ENCODE measurements at regions of chr3 and their contacts with region 1.

Region 1: GRCh38 chr3:62188681-62189383 is 184.5 kb downstream of the FEZF2 start:
- DNase-seq: peak; percentile 76 to 92
- H3K4me3 ChIP-seq: no peak overlapping the region
- H3K27ac ChIP-seq: no peak overlapping the region
- H3K4me1 ChIP-seq: peaks cover 0 to 20% (median 3%) of the 10 kb centered on the region in 4 donors
- H3K27me3 ChIP-seq: no peaks in the 10 kb centered on the region
- CTCF ChIP-seq: peak in 4 of 7 experiments; percentile 64 to 84 (median 82)
- EP300 ChIP-seq: no peak
- POLR2A ChIP-seq: no peak

Region 2: GRCh38 chr3:61561374-61562041 is 627.3 kb before region 1 on chr3 and contains the start of gene PTPRG:
- intact Hi-C with region 1: loop called (anchors 10 kb)
- DNase-seq: peak; percentile 90 to 97
- H3K4me3 ChIP-seq: peak within 1 kb of the TSS; percentile 70 to 83 (median 76)
- H3K27ac ChIP-seq: peak within 1 kb of the TSS; percentile 93 to 97 (median 95)
- H3K4me1 ChIP-seq: peaks cover 5 to 46% (median 35%) of the 10 kb centered on the region in 4 donors
- H3K27me3 ChIP-seq: peaks cover 0 to 54% (median 0%) of the 10 kb centered on the region in 3 donors
- CTCF ChIP-seq: no peak
- EP300 ChIP-seq: no peak
- POLR2A ChIP-seq: peak in 1 of 4 donors; percentile 18
- total RNA-seq, gene PTPRG: 12.5 to 96.0 (median 33.0) TPM

Region 3: DNA sequence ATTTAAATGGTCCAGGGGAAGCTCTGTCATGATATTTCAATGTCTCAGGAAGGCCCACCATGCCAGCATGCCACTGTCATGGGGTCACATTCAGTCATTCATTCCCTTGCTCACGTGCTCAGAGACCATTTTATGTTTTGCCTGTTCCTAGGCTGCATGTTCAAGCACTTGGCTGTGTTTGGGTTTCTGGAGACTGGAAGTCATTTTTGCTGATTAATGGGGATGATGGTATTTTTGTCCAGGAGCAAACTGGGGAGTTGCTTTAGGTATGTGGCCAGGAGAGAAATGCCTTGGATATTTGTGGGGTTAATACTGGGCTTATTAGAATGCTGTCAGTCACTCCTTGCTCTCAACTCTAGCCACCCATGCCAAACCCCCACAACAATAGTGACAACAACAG is 323.9 kb before region 1 on chr3:
- intact Hi-C with region 1: loop called (anchors 10 kb)
- DNase-seq: no peak
- H3K4me3 ChIP-seq: no peak overlapping the region
- H3K27ac ChIP-seq: no peak overlapping the region
- H3K4me1 ChIP-seq: peaks cover 0 to 35% (median 3%) of the 10 kb centered on the region in 4 donors
- H3K27me3 ChIP-seq: no peaks in the 10 kb centered on the region
- CTCF ChIP-seq: no peak
- EP300 ChIP-seq: no peak
- POLR2A ChIP-seq: no peak

Measured in stomach (tissue), 19 donors.